ENCODE measurements at regions of chrX and their contacts with region 1.

Region 1: DNA sequence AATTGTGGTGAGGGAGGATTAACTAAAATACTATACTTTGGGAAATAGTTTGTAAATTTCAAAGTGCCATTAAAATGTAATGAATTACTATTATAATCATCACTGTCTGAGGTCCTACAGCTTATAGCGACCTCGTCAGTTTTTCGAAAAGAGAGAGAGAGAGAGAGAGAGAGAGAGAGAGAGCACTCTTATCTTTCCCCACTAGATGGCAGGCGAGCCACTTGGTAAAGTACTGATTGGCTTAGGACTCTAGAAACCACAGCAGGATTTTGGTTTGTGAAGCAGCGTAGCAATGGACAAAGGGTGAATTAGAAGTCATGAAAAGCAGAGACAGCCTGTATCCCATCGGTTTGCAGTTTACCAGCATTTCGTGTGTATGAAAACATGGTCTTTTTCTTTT is 52.5 kb downstream of the LINC00632 start:
- DNase-seq: peak in 5 of 14 experiments; percentile 5 to 47 (median 38)
- ATAC-seq: no peak
- H3K4me3 ChIP-seq: no peak overlapping the region
- H3K4me3 Mint-ChIP-seq: peak overlapping the region; percentile 30
- H3K27ac ChIP-seq: no peak overlapping the region
- H3K27ac Mint-ChIP-seq: no peak overlapping the region
- H3K4me1 ChIP-seq: peaks cover 9% of the 10 kb centered on the region
- H3K4me1 Mint-ChIP-seq: peaks cover 13% of the 10 kb centered on the region
- H3K27me3 ChIP-seq: peaks cover 13 to 16% of the 10 kb centered on the region in 2 experiments
- H3K27me3 Mint-ChIP-seq: peaks cover 24% of the 10 kb centered on the region
- CTCF ChIP-seq: peak; percentile 65

Region 2: GRCh38 chrX:140712413-140713173 is 49.5 kb before region 1 on chrX:
- CTCF ChIA-PET with region 1: no interaction called
- POLR2A ChIA-PET with region 1: no interaction called
- intact Hi-C with region 1: no loop called
- DNase-seq: peak in 11 of 14 experiments; percentile 1 to 73 (median 28)
- ATAC-seq: peak; percentile 78
- H3K4me3 ChIP-seq: peak overlapping the region; percentile 3
- H3K4me3 Mint-ChIP-seq: peak overlapping the region; percentile 73
- H3K27ac ChIP-seq: no peak overlapping the region
- H3K27ac Mint-ChIP-seq: no peak overlapping the region
- H3K4me1 ChIP-seq: no peaks in the 10 kb centered on the region
- H3K4me1 Mint-ChIP-seq: peaks cover 7% of the 10 kb centered on the region
- H3K27me3 ChIP-seq: no peaks in the 10 kb centered on the region
- H3K27me3 Mint-ChIP-seq: no peaks in the 10 kb centered on the region
- CTCF ChIP-seq: no peak

Region 3: DNA sequence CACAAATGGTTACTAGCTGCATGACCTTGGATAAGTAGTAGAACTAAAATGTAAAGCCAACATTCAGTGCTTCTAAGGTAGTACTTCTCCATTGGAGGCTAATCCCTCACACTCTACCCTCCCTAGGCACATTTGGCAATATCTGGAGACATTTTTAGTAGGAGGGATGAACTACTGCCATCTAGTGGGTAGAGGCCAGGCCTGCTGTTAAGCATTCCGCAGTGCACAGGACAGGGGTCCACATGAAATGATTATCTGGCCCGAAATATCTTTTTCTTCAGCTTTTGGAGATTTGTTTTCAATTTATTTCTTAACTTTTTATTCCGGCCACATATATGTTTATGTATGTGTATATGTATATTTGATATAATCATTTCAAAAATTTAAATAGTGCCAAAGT is 516.2 kb after region 1 on chrX:
- CTCF ChIA-PET with region 1: no interaction called
- POLR2A ChIA-PET with region 1: no interaction called
- intact Hi-C with region 1: loop called in 1 of 2 experiments (anchors 10 kb)
- DNase-seq: peak in 2 of 14 experiments; percentile 3 to 8
- ATAC-seq: no peak
- H3K4me3 ChIP-seq: no peak overlapping the region
- H3K4me3 Mint-ChIP-seq: no peak overlapping the region
- H3K27ac ChIP-seq: no peak overlapping the region
- H3K27ac Mint-ChIP-seq: no peak overlapping the region
- H3K4me1 ChIP-seq: no peaks in the 10 kb centered on the region
- H3K4me1 Mint-ChIP-seq: no peaks in the 10 kb centered on the region
- H3K27me3 ChIP-seq: no peaks in the 10 kb centered on the region
- H3K27me3 Mint-ChIP-seq: no peaks in the 10 kb centered on the region
- CTCF ChIP-seq: no peak